Activated CD4-positive, alpha-beta memory T cell treated with anti-CD3 and anti-CD28 coated beads for 36 hours (primary cell): ENCODE measurements at regions of chr5 and their contacts with region 1.

Region 1: GRCh38 chr5:135543485-135544304 is 7.9 kb upstream of the NEUROG1 start:
- DNase-seq: no peak
- H3K4me3 Mint-ChIP-seq: peak overlapping the region; percentile 74
- H3K27ac Mint-ChIP-seq: no peak overlapping the region
- H3K4me1 Mint-ChIP-seq: peaks cover 10% of the 10 kb centered on the region
- H3K27me3 Mint-ChIP-seq: peaks cover 83% of the 10 kb centered on the region

Region 2: GRCh38 chr5:135034236-135034962 is 509.3 kb before region 1 on chr5:
- CTCF ChIA-PET with region 1: no interaction called
- POLR2A ChIA-PET with region 1: no interaction called
- intact Hi-C with region 1: loop called (anchors 10 kb)
- DNase-seq: peak; percentile 61
- H3K4me3 Mint-ChIP-seq: peak overlapping the region; percentile 69
- H3K27ac Mint-ChIP-seq: no peak overlapping the region
- H3K4me1 Mint-ChIP-seq: peaks cover 34% of the 10 kb centered on the region
- H3K27me3 Mint-ChIP-seq: peaks cover 74% of the 10 kb centered on the region

Region 3: DNA sequence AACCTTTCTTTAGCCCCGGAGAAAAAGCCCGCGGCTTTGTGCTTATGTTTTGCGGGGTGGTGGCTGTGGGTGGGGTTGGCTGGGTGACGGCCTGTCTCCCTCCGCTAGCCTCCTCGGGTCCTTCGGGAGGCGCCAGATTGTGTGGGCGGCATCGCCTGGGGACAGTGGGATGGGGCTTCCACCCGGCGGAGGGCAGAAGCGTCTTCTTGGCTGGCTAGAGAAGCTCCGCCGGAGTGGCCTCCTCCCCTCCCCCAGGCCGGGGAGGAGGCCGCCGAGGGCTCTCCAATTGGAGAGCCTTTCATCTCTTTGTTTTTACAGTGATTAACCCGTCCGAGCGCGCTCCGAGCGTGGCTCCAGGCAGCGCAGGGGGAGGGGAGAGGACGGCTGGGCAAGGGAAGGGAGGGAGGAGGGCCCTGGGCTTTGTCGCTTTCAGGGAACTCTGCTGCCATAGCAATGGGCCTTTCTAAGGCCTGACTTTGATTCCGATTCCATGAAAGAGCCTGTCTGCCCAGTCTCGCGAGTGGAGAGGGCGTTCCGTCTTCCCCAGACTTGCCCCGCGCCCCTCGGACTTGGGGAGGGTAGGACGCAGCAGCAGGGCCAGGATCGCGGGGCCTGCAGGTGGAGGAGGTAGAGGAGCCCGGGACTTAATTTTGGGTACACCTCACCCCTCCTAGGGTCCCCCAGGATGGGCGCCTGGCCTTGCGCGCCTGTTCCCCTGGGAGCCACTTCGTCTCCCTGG is 54.8 kb before region 1 on chr5:
- CTCF ChIA-PET with region 1: no interaction called
- POLR2A ChIA-PET with region 1: no interaction called
- intact Hi-C with region 1: loop called (anchors 5 kb)
- DNase-seq: no peak
- H3K4me3 Mint-ChIP-seq: no peak overlapping the region
- H3K27ac Mint-ChIP-seq: no peak overlapping the region
- H3K4me1 Mint-ChIP-seq: peaks cover 3% of the 10 kb centered on the region
- H3K27me3 Mint-ChIP-seq: peaks cover 74% of the 10 kb centered on the region